ENCODE measurements at regions of chr14 and their contacts with region 1.

Region 1: GRCh38 chr14:23120541-23121251 is 1.6 kb upstream of the CEBPE start:
- DNase-seq: peak; percentile 65
- H3K4me3 ChIP-seq: no peak overlapping the region
- H3K27ac ChIP-seq: no peak overlapping the region
- H3K27me3 ChIP-seq: peaks cover 3% of the 10 kb centered on the region
- CTCF ChIP-seq: peak; percentile 100

Region 2: DNA sequence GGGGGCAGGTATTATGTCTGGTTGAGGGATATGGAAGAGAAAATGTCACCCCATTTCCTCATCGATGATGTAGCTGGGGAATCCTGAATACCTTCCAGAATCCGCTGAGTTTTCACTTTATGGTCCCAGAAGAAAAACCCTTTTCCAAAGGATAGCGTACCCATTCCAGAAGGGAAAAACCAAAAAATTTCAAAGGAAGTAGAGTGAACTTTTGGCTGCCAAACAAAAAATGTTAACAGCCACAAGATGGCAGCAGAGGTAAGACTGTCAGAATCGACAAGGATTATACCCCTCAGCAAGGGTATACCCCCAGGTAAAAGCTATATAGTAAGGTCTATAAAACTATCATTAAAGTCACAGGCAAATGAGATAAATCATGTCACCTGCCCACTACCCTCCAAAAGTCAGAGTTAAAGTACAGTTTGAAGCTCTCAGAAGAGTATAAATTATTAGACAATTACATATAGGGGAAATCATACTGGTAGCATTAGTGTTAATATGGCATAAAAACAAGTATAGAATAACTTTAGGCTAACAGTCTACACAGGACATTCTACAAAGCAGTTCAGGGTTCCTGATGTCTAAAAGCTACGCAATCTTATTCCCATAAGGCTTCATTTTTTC is 43.8 kb before region 1 on chr14:
- CTCF ChIA-PET with region 1: interaction called, 15 read pairs
- POLR2A ChIA-PET with region 1: no interaction called
- DNase-seq: no peak
- H3K4me3 ChIP-seq: no peak overlapping the region
- H3K27ac ChIP-seq: no peak overlapping the region
- H3K27me3 ChIP-seq: no peaks in the 10 kb centered on the region
- CTCF ChIP-seq: peak; percentile 75

Region 3: DNA sequence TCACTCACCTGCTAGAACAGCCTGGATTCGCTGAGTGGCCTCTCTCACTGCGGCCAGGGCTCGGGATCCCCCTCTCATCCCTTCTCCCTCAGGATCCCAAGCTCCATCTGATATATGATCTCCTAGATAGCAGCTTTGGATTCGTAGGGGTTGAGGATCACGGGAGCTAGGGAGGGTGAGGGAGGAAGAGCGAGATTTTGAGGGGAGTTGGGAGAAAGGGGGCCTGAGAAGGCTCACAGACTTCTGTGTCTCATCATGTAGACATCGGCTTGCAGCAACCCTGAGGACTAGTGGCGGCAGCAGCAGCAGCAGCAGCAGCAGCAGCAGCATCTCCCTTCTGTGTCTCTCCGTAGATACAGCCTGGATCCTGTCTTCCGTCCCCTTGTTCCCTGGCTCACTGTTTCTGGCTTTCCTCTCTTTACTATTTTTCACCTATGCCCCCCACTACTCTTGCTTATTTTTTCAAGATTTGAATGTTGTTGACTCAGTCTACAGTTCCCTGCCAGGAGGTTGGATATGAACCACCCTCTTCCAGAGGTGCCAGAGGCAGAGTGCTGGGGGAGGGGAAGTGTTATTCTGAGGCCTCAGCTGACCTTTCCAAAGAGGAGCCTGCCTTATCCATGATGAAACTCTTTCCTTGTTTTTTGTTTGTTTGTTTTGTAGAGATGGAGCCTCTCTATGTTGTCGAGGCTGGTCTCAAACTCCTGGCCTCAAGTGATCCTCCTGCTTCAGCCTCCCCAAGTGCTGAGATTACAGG is 15.9 kb before region 1 on chr14 and contains the start of gene CIROP:
- CTCF ChIA-PET with region 1: interaction called, 28 read pairs
- POLR2A ChIA-PET with region 1: no interaction called
- DNase-seq: no peak
- H3K4me3 ChIP-seq: peak within 1 kb of the TSS; percentile 1; the same call in 1 of the 2 replicates
- H3K27ac ChIP-seq: no peak within 1 kb of the TSS
- H3K27me3 ChIP-seq: no peaks in the 10 kb centered on the region
- CTCF ChIP-seq: no peak
- polyA plus RNA-seq, gene CIROP: 0.07 and 0.12 TPM in 2 replicates

Region 4: DNA sequence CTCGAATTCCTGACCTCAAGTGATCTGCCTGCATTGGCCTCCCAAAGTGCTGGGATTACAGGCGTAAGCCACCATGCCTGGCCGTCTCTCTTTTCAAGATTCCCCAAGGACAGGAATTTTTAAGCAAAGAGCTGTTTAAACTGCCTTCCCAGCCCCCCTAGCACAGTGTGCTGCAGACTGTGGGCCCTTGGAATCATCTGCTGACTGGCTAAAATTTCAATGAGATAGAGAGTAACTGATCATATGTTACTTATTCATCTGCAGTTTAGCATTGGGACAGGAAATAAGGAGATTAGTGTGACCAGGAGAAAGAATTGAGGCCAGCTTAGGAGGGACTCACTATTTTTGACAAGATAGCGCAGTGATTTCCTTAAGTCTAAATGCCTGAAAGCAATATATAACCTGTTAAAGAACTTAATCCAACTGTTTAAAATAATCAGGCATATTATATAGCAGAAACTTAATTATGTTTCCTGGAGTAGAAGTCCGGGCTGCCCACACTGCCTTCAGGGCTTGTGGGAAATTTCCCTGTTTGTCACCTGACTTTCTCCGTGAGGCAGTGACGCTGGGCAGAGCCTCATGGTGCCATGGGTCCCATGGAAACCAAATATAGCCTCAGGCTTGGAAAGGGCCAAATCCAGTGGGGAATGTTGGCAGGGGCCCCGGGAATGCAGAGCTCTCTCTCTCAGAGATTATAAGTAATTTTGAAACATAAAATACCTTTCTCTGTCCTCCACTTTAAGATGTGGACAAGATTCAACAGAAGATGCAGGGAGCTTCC is 21.2 kb after region 1 on chr14:
- CTCF ChIA-PET with region 1: interaction called, 18 read pairs
- POLR2A ChIA-PET with region 1: no interaction called
- DNase-seq: no peak
- H3K4me3 ChIP-seq: no peak overlapping the region
- H3K27ac ChIP-seq: no peak overlapping the region
- H3K27me3 ChIP-seq: peaks cover 25% of the 10 kb centered on the region
- CTCF ChIP-seq: no peak

Region 5: DNA sequence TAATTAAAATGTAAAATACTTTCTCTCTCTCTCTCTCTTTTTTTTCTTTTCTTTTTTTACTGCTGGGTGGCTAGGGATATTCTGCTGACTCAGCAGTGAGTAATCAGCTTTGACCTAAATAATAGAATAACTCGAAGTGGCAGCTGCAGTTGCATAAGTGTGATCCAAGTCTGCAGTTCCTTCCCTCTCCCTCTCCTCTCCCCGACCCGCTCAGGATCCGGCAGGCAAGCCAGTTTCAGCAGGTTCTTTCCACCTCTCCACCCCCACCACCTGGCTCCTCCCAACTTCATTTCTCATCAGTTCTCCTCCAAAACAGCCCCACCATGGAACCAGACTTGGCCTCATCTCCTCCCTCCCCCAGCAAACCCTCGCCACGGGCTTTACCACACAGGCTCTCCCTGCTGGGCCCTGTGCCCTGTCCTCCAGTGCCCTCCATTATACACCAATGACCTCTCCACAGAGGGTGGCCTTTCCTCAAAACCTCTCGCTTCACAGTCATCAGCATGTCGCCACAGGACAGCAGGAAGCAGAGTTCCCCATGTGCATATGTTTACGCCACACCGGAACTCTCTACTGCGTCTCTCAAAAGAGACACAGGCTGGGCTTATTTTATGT is 40.3 kb after region 1 on chr14:
- CTCF ChIA-PET with region 1: interaction called, 46 read pairs
- POLR2A ChIA-PET with region 1: no interaction called
- DNase-seq: peak; percentile 30
- H3K4me3 ChIP-seq: no peak overlapping the region
- H3K27ac ChIP-seq: peak overlapping the region; percentile 39
- H3K27me3 ChIP-seq: peaks cover 5% of the 10 kb centered on the region
- CTCF ChIP-seq: no peak

Region 6: DNA sequence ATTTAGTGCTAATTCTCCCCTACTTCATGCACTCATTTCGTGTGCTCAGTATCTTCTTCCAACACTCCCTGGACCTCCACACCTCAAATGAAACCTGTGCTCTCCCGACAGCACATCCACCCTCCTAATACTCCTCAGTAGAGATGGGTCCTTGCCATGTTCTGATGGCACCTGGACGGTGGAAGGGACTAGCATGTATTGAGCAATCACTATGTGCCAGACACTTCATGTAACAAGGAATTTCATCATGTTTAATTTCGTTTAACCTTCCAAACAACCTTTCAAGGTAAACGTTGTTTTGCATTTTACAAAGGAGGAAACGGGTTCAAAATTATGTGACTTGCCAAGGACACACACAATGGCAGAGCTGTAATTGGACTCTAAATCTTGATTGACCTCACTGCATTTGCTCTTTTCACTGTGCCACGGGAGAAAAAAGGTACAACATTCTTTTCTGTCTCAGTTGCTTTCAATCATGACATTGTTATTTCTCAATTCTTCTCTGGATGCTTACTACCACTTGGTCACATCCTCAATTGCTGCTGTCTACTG is 74.9 kb after region 1 on chr14:
- CTCF ChIA-PET with region 1: interaction called, 818 read pairs
- POLR2A ChIA-PET with region 1: interaction called, 7 read pairs
- DNase-seq: no peak
- H3K4me3 ChIP-seq: no peak overlapping the region
- H3K27ac ChIP-seq: no peak overlapping the region
- H3K27me3 ChIP-seq: peaks cover 17% of the 10 kb centered on the region
- CTCF ChIP-seq: no peak

Region 7: GRCh38 chr14:23301288-23301968 is 180.7 kb after region 1 on chr14:
- CTCF ChIA-PET with region 1: interaction called, 13 read pairs
- POLR2A ChIA-PET with region 1: interaction called, 7 read pairs
- DNase-seq: peak; percentile 92
- H3K4me3 ChIP-seq: peak overlapping the region; percentile 79
- H3K27ac ChIP-seq: peak overlapping the region; percentile 98
- H3K27me3 ChIP-seq: no peaks in the 10 kb centered on the region
- CTCF ChIP-seq: peak; percentile 60

Region 8: DNA sequence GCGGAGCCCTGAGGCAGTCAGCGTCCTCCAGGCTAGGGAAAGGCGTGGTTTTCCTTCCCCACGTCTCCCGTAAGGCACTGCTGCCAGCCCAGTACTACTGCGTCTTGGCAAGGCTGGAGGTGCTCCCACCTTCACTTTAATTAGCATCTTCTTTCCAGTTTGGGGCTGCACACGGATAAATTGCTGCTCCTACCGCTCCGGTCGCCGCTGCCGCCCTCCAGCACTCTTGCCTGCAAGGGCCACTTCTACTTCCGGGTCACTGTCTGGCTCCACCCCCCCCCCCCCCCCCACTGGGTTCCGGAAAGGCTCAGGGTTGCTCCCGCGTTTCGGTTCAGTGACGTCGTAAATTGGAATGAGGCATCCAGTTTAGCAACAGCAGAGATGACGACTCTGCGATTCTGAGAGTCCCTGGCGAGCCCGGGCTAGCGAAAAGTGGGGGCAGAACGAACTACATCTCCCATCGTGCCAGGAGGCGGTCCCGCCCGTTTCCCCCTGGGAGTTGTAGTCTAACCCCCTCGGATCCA is 1111.5 kb after region 1 on chr14 and contains the start of gene NEDD8:
- CTCF ChIA-PET with region 1: no interaction called
- POLR2A ChIA-PET with region 1: no interaction called
- DNase-seq: peak; percentile 86
- H3K4me3 ChIP-seq: peak within 1 kb of the TSS; percentile 95
- H3K27ac ChIP-seq: peak within 1 kb of the TSS; percentile 90
- H3K27me3 ChIP-seq: no peaks in the 10 kb centered on the region
- CTCF ChIP-seq: no peak
- polyA plus RNA-seq, gene NEDD8: 335 and 363 TPM in 2 replicates

Measured in AG04450 (cell line).